MCF 10A (cell line): ENCODE measurements at regions of chr3 and their contacts with region 1.

Region 1: DNA sequence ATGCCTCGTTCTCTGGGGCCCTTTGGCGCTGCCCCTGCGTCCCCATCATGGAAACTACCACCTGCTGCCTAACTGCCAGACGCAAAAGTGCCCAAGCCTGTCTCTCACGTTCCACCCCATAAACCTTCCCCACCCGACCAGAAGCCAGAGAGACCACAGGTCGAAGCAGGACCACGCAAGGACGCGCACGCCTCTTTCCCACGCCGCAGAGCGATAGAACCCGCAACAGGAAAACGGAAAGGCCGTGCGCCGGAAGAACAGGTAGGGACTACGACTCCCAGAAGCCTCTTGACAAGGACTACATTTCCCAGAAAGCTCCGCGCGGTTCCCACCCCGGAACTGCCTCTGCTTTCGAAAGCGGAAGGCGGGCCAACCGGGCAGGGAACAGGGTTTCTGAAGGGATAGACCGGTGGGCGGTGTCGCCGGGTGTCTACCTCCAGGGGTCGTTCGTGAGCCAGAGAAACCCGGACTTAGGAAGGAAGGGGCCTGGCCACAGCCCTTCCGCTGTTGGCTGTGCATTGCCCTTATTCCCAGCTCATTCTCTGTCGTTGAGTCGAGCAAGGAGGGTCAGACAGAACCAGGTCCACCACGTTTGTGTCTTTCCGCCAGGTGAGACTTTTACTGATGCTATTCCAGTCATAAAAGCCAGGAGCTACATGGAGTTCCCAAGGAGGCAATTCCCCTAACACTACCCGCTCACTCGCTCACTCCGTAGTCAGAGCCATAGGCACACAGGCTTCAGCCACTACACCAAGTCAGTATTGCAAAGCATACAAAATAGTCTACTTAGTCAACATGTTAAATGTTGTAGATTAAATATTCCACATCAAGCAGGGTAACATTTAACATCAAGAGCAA is 56.6 kb upstream of the ZBTB38 start:
- DNase-seq: peak; percentile 98
- H3K4me3 Mint-ChIP-seq: peak overlapping the region; percentile 86
- H3K27ac Mint-ChIP-seq: peak overlapping the region; percentile 85
- H3K4me1 Mint-ChIP-seq: peaks cover 7% of the 10 kb centered on the region
- H3K27me3 Mint-ChIP-seq: no peaks in the 10 kb centered on the region
- CTCF ChIP-seq: peak; percentile 61

Region 2: DNA sequence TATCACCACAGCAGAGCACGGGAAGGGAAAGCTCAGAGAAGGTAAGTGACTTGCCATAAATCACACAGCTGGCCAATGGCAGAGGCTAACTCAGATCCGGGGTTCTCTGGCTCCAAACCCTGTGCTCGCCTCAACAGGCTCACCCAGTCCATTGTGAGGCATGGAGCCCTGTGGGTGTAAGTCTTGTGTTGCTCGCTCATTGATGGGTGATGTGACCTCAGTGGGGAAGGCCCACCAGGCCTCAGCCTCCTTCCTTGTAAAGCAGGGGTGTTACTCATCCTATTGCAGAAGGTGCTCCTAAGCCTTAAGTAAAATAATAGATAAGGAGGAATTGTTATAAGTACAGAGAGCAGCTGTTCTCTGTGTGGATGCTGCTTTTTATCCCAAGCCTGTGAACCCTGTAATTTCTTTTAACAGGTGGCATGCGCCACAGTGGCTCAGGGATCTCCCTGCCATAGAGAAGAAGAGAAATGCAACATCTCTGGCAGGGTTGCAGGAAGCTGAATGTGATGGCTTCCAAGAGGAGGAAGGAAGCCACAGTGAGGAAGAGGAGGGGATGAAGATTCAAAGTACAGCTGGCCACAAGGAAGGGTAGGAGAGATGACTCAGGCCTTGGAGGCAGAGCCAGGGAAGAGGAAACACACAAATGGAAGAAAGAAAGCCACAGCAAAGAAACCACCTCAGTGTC is 291.4 kb before region 1 on chr3:
- CTCF ChIA-PET with region 1: no interaction called
- POLR2A ChIA-PET with region 1: no interaction called
- intact Hi-C with region 1: no loop called
- DNase-seq: no peak
- H3K4me3 Mint-ChIP-seq: no peak overlapping the region
- H3K27ac Mint-ChIP-seq: no peak overlapping the region
- H3K4me1 Mint-ChIP-seq: no peaks in the 10 kb centered on the region
- H3K27me3 Mint-ChIP-seq: peaks cover 25% of the 10 kb centered on the region
- CTCF ChIP-seq: no peak

Region 3: DNA sequence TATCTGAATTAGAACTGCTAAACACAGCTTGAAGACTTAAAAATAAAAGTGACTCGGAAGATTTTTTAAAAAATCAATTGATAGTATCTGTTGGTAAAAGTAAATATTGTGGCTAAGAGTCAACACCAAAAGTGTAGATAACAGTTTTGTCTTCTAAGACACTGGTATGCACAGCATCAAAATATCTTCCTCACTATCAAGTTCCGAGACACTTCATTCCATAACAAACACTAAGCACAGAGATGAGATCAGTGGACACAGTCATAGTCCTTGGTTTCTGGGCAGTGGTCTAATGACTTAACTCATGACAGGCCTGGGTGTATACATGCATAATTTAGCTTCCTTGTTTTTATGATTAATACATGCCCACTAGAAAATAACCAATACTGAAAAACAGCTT is 16.9 kb before region 1 on chr3:
- CTCF ChIA-PET with region 1: interaction called, 7 read pairs
- POLR2A ChIA-PET with region 1: interaction called, 16 read pairs
- intact Hi-C with region 1: no loop called
- DNase-seq: no peak
- H3K4me3 Mint-ChIP-seq: peak overlapping the region; percentile 73
- H3K27ac Mint-ChIP-seq: peak overlapping the region; percentile 85
- H3K4me1 Mint-ChIP-seq: peaks cover 6% of the 10 kb centered on the region
- H3K27me3 Mint-ChIP-seq: no peaks in the 10 kb centered on the region
- CTCF ChIP-seq: no peak

Region 4: GRCh38 chr3:141402476-141403171 is 90.9 kb after region 1 on chr3:
- CTCF ChIA-PET with region 1: interaction called, 4 read pairs
- POLR2A ChIA-PET with region 1: interaction called, 12 read pairs
- intact Hi-C with region 1: no loop called
- DNase-seq: peak; percentile 60
- H3K4me3 Mint-ChIP-seq: peak overlapping the region; percentile 69
- H3K27ac Mint-ChIP-seq: peak overlapping the region; percentile 94
- H3K4me1 Mint-ChIP-seq: peaks cover 56% of the 10 kb centered on the region
- H3K27me3 Mint-ChIP-seq: no peaks in the 10 kb centered on the region
- CTCF ChIP-seq: no peak

Region 5: GRCh38 chr3:141452036-141452435 is 140.3 kb after region 1 on chr3:
- CTCF ChIA-PET with region 1: interaction called, 392 read pairs
- POLR2A ChIA-PET with region 1: interaction called, 7 read pairs
- intact Hi-C with region 1: loop called (anchors 1 kb)
- DNase-seq: peak; percentile 56
- H3K4me3 Mint-ChIP-seq: no peak overlapping the region
- H3K27ac Mint-ChIP-seq: no peak overlapping the region
- H3K4me1 Mint-ChIP-seq: peaks cover 26% of the 10 kb centered on the region
- H3K27me3 Mint-ChIP-seq: no peaks in the 10 kb centered on the region
- CTCF ChIP-seq: peak; percentile 50

Region 6: GRCh38 chr3:141561426-141562034 is 249.8 kb after region 1 on chr3:
- CTCF ChIA-PET with region 1: interaction called, 15 read pairs
- POLR2A ChIA-PET with region 1: interaction called, 3 read pairs
- intact Hi-C with region 1: loop called (anchors 1 kb)
- DNase-seq: peak; percentile 64
- H3K4me3 Mint-ChIP-seq: no peak overlapping the region
- H3K27ac Mint-ChIP-seq: no peak overlapping the region
- H3K4me1 Mint-ChIP-seq: no peaks in the 10 kb centered on the region
- H3K27me3 Mint-ChIP-seq: no peaks in the 10 kb centered on the region
- CTCF ChIP-seq: peak; percentile 88